ENCODE measurements at regions of chr18 and their contacts with region 1.

Region 1: DNA sequence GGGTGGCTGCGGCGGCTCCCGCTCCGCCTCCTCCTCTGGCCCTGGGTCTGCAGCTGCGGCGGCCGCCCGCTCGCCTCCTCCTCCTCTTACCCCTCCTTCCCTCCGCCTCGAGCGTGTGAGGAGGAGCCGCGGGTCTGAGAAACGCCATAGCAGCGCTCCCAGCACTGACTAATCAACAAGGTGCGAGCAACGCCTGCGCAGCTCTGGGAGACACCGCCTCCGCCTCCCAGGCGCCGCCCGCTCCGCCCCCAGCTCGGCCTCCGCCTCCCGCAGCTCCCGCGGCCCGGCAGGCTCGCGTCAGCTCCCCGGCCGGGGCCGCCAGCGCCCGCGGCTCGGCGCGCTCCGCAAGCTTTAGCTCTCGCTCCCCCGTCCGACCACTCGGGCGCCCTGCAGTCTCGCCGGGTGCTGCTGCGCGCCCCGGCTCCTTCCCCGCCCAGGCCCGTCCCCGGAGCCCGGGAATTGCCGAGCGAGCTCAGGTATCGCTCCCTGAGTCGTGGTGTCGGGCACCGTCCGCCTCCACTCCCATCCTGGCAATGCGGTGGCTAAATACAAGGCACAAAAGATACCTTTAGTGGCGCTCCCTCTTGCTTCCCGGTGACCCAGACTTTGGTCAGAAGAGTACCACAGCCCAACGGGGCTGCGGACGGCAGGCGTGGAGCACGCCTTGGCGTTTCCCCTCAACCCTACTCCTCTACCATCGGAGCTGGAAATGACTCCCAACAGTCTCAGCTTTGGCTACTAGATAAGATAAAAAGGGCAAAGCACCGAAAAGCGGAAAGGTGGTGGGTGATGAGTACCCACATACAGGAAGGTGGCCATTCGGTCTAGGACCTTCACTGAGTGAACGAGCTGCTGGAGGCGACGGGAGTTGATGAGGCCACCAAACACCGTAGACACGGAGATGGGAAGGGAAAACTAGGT is at the start of gene GAREM1:
- DNase-seq: peak; percentile 66
- H3K4me3 ChIP-seq: peak within 1 kb of the TSS; percentile 56
- H3K27me3 ChIP-seq: peaks cover 8% of the 10 kb centered on the region
- CTCF ChIP-seq: peak; percentile 63
- polyA plus RNA-seq, gene GAREM1: 0.37 and 0.48 TPM in 2 replicates

Region 2: DNA sequence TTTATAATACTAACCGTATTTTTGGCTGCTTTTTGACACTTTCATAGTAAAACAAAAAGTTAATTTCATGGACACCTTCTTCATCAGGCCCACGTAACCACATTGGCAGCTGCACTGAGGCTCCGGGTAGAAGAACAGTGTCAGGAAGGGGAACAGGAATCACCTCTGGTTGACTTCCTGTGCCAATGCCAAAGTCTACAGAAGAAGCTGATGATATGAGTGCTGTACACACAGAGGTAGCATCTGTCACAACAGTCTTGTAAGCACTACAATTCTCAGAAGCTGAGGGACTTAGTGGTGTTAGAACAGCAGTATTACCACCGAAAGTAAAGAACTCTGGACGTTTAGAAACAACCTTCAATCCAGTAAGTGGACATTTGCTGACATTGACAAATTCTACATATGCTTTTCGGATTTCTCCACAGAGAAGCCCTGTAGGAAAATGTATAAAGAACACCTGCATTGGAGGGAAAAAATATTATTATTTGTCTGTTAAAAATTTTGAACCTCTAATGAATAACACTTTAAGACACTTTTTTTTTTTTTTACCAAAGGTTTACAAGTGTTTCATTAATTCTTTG is 613.4 kb before region 1 on chr18:
- CTCF ChIA-PET with region 1: no interaction called
- POLR2A ChIA-PET with region 1: no interaction called
- DNase-seq: no peak
- H3K4me3 ChIP-seq: no peak overlapping the region
- H3K27me3 ChIP-seq: no peaks in the 10 kb centered on the region
- CTCF ChIP-seq: no peak

Region 3: GRCh38 chr18:32158108-32158624 is 312.8 kb before region 1 on chr18:
- CTCF ChIA-PET with region 1: interaction called, 17 read pairs
- POLR2A ChIA-PET with region 1: no interaction called
- DNase-seq: peak; percentile 25
- H3K4me3 ChIP-seq: no peak overlapping the region
- H3K27me3 ChIP-seq: no peaks in the 10 kb centered on the region
- CTCF ChIP-seq: peak; percentile 84

Region 4: GRCh38 chr18:32271672-32272208 is 199.2 kb before region 1 on chr18:
- CTCF ChIA-PET with region 1: interaction called, 55 read pairs
- POLR2A ChIA-PET with region 1: no interaction called
- DNase-seq: no peak
- H3K4me3 ChIP-seq: no peak overlapping the region
- H3K27me3 ChIP-seq: peaks cover 2% of the 10 kb centered on the region; the same call in 1 of the 2 replicates
- CTCF ChIP-seq: peak; percentile 68

Region 5: DNA sequence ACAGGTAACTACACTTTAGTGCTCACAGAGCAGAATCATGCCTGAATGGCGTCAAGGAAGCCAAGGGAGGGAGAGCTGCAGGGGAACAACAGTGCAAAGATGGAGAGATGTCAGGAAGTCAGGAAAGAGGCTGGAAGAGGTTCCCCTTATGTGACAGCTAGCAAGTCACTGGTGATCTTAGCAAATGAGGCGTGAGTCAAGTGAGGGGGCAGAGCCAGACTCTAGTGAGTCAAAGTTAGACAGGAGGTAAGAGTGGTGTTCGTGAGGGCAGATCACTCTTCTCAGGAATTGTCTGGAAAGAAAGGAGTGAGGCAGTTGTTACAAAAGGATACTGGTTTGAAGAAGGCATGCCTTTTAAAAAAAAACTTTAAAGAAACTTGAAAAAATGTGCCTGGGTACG is 194.1 kb before region 1 on chr18:
- CTCF ChIA-PET with region 1: interaction called, 55 read pairs
- POLR2A ChIA-PET with region 1: no interaction called
- DNase-seq: no peak
- H3K4me3 ChIP-seq: no peak overlapping the region
- H3K27me3 ChIP-seq: peaks cover 2% of the 10 kb centered on the region; the same call in 1 of the 2 replicates
- CTCF ChIP-seq: no peak

Region 6: DNA sequence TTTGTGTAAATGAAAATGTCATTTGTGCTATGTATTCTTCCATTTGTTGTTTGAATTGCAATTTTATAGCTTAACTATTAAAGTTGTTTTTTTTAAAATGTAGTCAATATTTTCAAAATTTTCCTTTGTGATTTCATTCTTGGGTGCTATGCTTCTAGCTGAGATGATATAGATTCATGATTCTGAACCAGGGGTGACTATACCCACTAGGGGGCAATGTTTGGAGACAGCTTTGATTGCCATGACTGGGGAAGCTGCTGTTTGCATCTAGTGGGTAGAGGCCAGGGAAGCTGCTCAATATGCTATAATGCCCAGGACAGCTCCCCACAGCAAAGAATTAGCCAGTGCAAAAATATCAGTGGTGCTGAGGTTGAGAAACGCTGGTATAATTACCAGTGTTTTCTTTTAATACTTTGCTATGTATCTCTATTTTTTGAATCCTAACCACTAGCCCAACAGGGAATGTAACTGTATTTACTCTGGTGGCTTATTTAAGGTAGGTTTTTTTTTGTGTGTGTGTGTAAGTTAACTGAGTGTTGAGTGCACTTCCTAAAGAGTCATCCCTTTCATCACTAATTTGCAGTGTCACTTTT is 181.4 kb before region 1 on chr18:
- CTCF ChIA-PET with region 1: interaction called, 57 read pairs
- POLR2A ChIA-PET with region 1: no interaction called
- DNase-seq: no peak
- H3K4me3 ChIP-seq: no peak overlapping the region
- H3K27me3 ChIP-seq: no peaks in the 10 kb centered on the region
- CTCF ChIP-seq: peak; percentile 82

Region 7: DNA sequence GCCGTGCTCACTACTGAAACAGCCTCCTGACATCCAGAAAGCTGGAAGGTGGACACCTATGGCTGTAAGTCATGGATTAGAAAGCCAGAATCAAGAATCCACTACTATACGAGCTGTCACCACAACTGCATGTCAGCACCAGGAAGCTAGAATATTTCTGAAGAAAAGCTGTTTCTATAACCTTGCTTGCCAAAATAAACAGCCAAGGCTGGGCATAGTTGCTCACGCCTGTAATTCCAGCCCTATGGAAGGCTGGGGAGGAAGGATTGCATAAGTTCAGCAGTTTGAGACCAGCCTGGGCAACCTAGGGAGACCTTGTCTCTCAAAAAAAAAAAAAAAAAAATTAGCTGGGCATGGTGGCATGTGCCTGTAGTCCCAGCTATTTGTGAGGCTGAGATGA is 96.0 kb after region 1 on chr18:
- CTCF ChIA-PET with region 1: no interaction called
- POLR2A ChIA-PET with region 1: no interaction called
- DNase-seq: no peak
- H3K4me3 ChIP-seq: no peak overlapping the region
- H3K27me3 ChIP-seq: no peaks in the 10 kb centered on the region
- CTCF ChIP-seq: no peak

Region 8: GRCh38 chr18:32707147-32707546 is 236.2 kb after region 1 on chr18:
- CTCF ChIA-PET with region 1: no interaction called
- POLR2A ChIA-PET with region 1: no interaction called
- DNase-seq: no peak
- H3K4me3 ChIP-seq: no peak overlapping the region
- H3K27me3 ChIP-seq: no peaks in the 10 kb centered on the region
- CTCF ChIP-seq: no peak